Caco-2 (cell line): ENCODE measurements at regions of chr9 and their contacts with region 1.

Region 1: GRCh38 chr9:121744002-121744686 is 92.7 kb downstream of the DAB2IP start:
- DNase-seq: peak; percentile 71 to 76
- H3K4me3 ChIP-seq: peak overlapping the region; percentile 32
- H3K4me3 Mint-ChIP-seq: no peak overlapping the region
- H3K27ac Mint-ChIP-seq: no peak overlapping the region
- H3K4me1 ChIP-seq: peaks cover 26% of the 10 kb centered on the region
- H3K4me1 Mint-ChIP-seq: peaks cover 5% of the 10 kb centered on the region
- H3K27me3 ChIP-seq: no peaks in the 10 kb centered on the region
- H3K27me3 Mint-ChIP-seq: no peaks in the 10 kb centered on the region
- CTCF ChIP-seq: peak; percentile 57 to 81

Region 2: DNA sequence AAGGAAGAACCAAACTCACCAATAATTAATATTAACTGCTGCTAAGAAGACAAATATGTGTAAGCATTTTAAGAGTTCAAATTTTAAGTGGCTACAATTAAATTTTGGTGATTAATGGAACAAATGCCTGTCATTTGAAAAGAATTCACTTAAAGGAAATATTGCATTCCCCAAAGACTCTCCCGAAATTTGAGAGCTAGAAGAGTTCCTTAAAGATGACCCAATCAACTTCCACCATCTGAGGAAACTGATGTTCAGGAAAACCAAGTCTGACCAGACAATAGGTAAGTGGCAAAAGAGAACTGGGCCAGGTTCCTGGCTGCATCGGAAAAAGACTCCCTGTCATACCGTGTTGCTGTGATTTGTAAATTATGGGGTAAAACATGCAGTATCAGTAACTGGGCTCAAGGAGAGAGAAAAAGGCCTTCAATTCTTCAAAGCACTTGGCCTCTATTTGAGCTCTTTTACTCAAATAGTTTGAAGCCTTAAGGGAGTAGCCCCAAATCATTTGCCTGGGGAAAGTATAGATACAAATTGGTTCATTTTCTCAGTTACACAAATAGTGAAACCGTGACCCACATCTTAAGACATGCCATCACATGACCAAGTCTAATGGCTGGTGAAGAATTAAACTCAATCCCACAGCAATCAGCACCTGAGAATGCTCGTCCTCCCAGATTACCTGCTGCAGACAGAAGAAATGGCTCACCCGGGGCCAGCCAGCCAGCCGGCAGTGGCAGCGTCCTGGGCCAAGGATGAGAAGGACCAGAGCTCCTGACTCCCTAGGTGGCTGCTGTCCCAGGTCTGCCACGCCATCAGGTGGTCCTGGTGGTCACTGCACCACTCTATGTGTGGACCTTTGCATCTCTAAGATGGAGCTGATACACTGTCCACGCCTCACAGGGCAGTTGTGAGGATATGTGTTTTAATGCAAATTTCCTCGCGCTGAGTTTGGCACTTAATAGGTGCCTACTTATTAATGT is 186.0 kb after region 1 on chr9:
- CTCF ChIA-PET with region 1: no interaction called
- POLR2A ChIA-PET with region 1: no interaction called
- intact Hi-C with region 1: loop called (anchors 5 kb)
- DNase-seq: peak in 1 of 2 experiments; percentile 18
- H3K4me3 ChIP-seq: no peak overlapping the region
- H3K4me3 Mint-ChIP-seq: no peak overlapping the region
- H3K27ac Mint-ChIP-seq: no peak overlapping the region
- H3K4me1 ChIP-seq: no peaks in the 10 kb centered on the region
- H3K4me1 Mint-ChIP-seq: no peaks in the 10 kb centered on the region
- H3K27me3 ChIP-seq: peaks cover 1% of the 10 kb centered on the region; the same call in 1 of the 2 replicates
- H3K27me3 Mint-ChIP-seq: peaks cover 9% of the 10 kb centered on the region
- CTCF ChIP-seq: peak in 1 of 2 experiments; percentile 34